Common myeloid progenitor, CD34-positive (primary cell): ENCODE measurements at regions of chr17 and their contacts with region 1.

Region 1: DNA sequence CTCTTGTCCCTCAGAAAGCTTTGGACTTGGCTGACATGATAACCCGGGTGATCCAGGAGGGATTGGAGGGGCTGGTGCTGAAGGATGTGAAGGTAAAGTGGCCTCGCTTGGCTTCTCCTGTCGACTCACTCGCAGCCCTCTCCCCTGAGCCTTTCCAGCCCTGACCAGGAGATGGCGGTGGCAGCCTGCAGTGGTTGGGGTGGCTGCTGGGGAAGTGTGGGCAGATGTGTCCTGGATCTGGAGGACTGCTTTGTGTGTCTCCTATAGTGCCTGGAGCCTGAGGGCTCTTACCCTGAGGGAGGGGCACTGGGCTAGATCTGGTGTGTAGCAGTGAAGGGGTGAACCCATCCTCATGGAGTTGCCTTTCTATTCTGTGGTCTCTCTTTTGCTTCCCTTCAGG is 17.9 kb downstream of the LIG3 start:
- DNase-seq: peak; percentile 71 to 85 (median 81)
- H3K4me3 ChIP-seq: no peak overlapping the region
- H3K27ac ChIP-seq: no peak overlapping the region
- H3K4me1 ChIP-seq: peaks cover 0 to 3% (median 2%) of the 10 kb centered on the region in 4 experiments
- H3K27me3 ChIP-seq: no peaks in the 10 kb centered on the region

Region 2: GRCh38 chr17:34259146-34259545 is 739.1 kb before region 1 on chr17:
- CTCF ChIA-PET with region 1: no interaction called
- POLR2A ChIA-PET with region 1: no interaction called
- DNase-seq: no peak
- H3K4me3 ChIP-seq: no peak overlapping the region
- H3K27ac ChIP-seq: no peak overlapping the region
- H3K4me1 ChIP-seq: peaks cover 3 to 23% (median 15%) of the 10 kb centered on the region in 4 experiments
- H3K27me3 ChIP-seq: no peaks in the 10 kb centered on the region

Region 3: GRCh38 chr17:35016369-35016768 is 18.2 kb after region 1 on chr17:
- CTCF ChIA-PET with region 1: interaction called, 10 read pairs
- POLR2A ChIA-PET with region 1: no interaction called
- DNase-seq: no peak
- H3K4me3 ChIP-seq: no peak overlapping the region
- H3K27ac ChIP-seq: no peak overlapping the region
- H3K4me1 ChIP-seq: no peaks in the 10 kb centered on the region
- H3K27me3 ChIP-seq: no peaks in the 10 kb centered on the region

Region 4: GRCh38 chr17:35063514-35064223 is 65.5 kb after region 1 on chr17 and contains the start of gene RFFL:
- CTCF ChIA-PET with region 1: interaction called, 11 read pairs
- POLR2A ChIA-PET with region 1: no interaction called
- DNase-seq: peak; percentile 97 to 99 (median 98)
- H3K4me3 ChIP-seq: peak within 1 kb of the TSS in 6 of 7 experiments; percentile 38 to 74 (median 54)
- H3K27ac ChIP-seq: peak within 1 kb of the TSS; percentile 77 to 88
- H3K4me1 ChIP-seq: peaks cover 17 to 53% (median 25%) of the 10 kb centered on the region in 4 experiments
- H3K27me3 ChIP-seq: no peaks in the 10 kb centered on the region

Region 5: DNA sequence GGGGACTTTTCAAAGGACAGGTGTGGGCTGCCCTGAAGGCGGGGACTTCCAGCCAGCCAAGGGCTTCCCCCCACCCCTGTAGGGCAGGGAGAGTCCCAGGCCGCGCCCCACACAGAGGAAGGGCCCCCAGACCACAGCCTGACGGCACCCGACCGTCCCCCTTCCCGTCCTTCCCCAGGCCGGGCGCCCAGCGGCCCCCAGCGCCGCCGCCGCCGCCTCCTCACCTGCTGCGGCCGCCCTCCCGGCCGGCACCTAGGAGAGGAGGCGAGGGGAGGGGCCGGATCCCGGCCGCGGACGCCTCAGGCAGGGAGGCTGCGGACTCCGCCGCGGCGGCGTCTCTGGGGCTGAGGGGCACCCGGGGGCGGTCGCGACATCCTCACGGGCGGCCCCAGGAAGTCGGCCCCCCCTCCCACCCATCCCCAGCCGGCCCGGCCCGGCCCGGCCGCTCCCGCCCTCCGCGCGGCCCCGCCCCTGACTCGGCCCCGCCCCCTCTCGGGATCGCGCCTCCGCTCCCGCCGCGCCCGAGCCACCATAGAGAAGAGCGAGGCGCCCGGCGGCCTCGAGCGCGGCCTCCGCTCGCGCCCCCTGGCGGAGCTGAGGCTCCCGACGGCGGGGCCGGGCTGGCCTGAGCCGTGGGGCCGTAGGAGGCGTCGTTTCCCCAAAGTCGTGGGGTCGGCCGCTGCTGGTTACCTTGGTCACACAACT is 90.8 kb after region 1 on chr17:
- CTCF ChIA-PET with region 1: interaction called, 31 read pairs
- POLR2A ChIA-PET with region 1: interaction called, 3 read pairs
- DNase-seq: peak; percentile 78 to 90 (median 89)
- H3K4me3 ChIP-seq: peak overlapping the region; percentile 58 to 95 (median 90)
- H3K27ac ChIP-seq: peak overlapping the region; percentile 72 to 84
- H3K4me1 ChIP-seq: peaks cover 12 to 35% (median 27%) of the 10 kb centered on the region in 4 experiments
- H3K27me3 ChIP-seq: no peaks in the 10 kb centered on the region

Region 6: GRCh38 chr17:35094902-35095301 is 96.7 kb after region 1 on chr17:
- CTCF ChIA-PET with region 1: interaction called, 31 read pairs
- POLR2A ChIA-PET with region 1: no interaction called
- DNase-seq: no peak
- H3K4me3 ChIP-seq: no peak overlapping the region
- H3K27ac ChIP-seq: no peak overlapping the region
- H3K4me1 ChIP-seq: peaks cover 0 to 8% (median 8%) of the 10 kb centered on the region in 4 experiments
- H3K27me3 ChIP-seq: no peaks in the 10 kb centered on the region

Region 7: DNA sequence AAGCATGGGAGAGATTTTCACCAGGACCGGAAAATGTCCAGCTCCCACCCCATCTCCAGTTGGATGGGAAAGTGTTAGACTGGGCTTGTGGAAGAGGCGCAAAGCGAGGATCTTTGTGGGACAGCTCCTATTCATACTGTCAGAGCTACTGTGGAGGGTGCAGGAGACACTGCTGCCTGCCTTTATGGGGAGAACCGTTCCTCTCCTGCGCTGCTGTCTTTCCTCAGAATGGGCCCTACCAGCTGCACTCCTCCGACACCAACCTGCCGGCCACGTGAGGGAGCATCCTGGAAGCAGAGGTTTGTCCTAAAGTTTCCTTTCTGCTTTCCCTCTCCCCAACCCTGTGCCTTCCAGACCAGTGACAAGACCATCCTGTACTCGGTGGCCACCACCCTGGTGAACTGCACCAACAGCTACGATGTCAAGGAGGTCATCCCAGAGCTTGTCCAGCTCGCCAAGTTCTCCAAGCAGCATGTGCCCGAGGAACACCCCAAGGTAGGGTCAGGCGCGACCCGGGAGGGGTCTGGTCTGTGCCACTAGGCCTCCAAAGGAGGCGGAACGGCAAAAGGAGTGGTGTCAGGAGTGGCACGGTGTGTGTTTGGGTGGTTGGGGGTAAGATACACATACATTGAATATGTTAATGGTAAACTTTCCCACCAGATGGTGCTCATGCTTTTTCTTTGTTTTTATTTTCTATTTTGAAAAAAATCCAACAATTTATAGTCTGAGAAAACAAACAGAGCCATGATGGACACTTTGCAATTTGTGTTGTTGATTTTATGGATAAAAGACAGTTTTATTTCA is 173.0 kb after region 1 on chr17:
- CTCF ChIA-PET with region 1: no interaction called
- POLR2A ChIA-PET with region 1: no interaction called
- DNase-seq: peak; percentile 42 to 62 (median 55)
- H3K4me3 ChIP-seq: no peak overlapping the region
- H3K27ac ChIP-seq: no peak overlapping the region
- H3K4me1 ChIP-seq: no peaks in the 10 kb centered on the region
- H3K27me3 ChIP-seq: peaks cover 0 to 7% (median 0%) of the 10 kb centered on the region in 5 experiments

Region 8: GRCh38 chr17:35407531-35407930 is 409.3 kb after region 1 on chr17:
- CTCF ChIA-PET with region 1: no interaction called
- POLR2A ChIA-PET with region 1: no interaction called
- DNase-seq: no peak
- H3K4me3 ChIP-seq: no peak overlapping the region
- H3K27ac ChIP-seq: no peak overlapping the region
- H3K4me1 ChIP-seq: no peaks in the 10 kb centered on the region
- H3K27me3 ChIP-seq: no peaks in the 10 kb centered on the region